Activated CD4-positive, alpha-beta T cell treated with anti-CD3 and anti-CD28 coated beads, Interleukin-2, amount 10 ng/mL, durations not matched to agents 7 days and 5 days (primary cell): ENCODE measurements at regions of chr1 and their contacts with region 1.

Region 1: GRCh38 chr1:11272832-11273594 is at the start of gene UBIAD1:
- DNase-seq: peak; percentile 87
- H3K4me3 Mint-ChIP-seq: peak within 1 kb of the TSS; percentile 82
- H3K27ac Mint-ChIP-seq: peak within 1 kb of the TSS; percentile 88
- H3K4me1 Mint-ChIP-seq: peaks cover 26% of the 10 kb centered on the region
- H3K27me3 Mint-ChIP-seq: no peaks in the 10 kb centered on the region
- total RNA-seq, gene UBIAD1: 53.7 to 59.1 TPM

Region 2: DNA sequence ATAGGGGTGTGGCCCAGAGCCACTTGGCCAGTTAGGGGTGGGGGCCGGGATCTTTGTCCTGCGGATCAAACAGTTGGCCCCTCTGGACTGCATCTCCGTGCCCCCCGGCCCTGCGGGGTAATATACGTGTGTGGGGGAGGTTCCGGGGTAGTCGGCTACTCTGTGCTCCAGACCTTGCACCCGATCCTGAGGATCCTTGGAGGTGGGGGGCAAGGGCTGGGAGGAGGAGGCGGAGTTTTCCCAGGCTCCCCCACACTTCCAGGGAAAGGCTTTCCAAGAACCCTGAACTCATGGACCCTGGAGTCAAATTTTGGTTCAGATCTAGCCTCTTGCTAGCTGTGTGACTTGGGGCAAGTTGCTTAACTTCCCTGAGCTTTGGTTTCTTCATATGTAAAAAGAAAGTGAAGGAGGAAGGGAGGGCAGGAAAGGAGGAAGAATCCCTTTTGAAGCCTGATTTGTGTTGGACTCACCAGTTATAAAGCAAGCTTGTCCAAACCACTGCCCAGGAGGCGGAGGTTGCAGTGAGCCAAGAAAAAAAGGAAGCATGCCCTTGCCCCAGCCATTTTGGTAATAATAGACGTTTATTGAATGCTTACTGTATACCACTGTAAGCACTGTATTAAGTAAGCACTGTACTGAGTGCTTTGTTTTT is 747.0 kb after region 1 on chr1:
- CTCF ChIA-PET with region 1: no interaction called
- POLR2A ChIA-PET with region 1: interaction called, 10 read pairs
- DNase-seq: peak; percentile 16
- H3K4me3 Mint-ChIP-seq: peak overlapping the region; percentile 77
- H3K27ac Mint-ChIP-seq: peak overlapping the region; percentile 90
- H3K4me1 Mint-ChIP-seq: peaks cover 23% of the 10 kb centered on the region
- H3K27me3 Mint-ChIP-seq: no peaks in the 10 kb centered on the region